ENCODE measurements at regions of chr5 and their contacts with region 1.

Region 1: DNA sequence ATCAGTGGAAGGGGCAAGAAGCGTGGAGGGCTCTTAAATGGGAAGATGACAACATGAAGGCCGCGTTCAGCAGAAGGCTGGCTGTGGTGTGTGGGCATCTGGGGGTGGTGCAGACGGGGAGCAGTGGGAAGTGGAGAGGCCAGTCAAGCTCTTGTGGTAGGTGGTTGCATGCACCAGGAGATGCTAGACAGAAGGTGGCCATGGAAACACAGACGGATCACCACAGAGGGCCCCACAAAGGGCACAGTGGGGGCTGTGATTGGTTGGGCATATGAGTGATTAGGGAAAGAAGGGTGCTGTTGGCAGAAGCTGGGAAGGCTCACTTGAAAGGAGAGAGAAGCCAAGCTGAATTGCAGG is 14.7 kb downstream of the MTMR12 start:
- DNase-seq: no peak
- H3K4me3 ChIP-seq: no peak overlapping the region
- H3K27ac ChIP-seq: no peak overlapping the region
- H3K4me1 ChIP-seq: peaks cover 4% of the 10 kb centered on the region
- H3K27me3 ChIP-seq: no peaks in the 10 kb centered on the region
- CTCF ChIP-seq: no peak
- POLR2A ChIP-seq: no peak

Region 2: DNA sequence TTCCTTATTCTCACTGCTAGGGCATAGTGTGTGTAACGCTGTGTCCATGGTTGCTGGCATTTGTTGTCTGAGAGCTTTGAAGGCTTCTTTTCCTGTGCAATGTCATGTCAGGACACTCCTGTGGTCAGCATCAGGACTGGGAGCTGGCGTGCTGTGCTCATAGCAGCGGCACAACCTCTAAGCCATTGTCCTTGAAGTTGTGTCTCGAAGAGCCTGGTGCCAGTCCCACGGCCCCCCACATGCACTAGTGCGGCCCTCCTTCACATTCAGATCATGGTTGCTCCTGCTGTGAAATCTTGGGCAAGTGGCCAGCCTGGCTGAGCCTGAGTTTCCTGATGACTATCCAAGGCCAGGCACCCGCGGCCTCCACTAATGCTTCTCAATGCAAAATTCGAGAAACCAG is 626.7 kb before region 1 on chr5:
- CTCF ChIA-PET with region 1: no interaction called
- POLR2A ChIA-PET with region 1: no interaction called
- dilution Hi-C with region 1: no loop called
- intact Hi-C with region 1: no loop called
- DNase-seq: no peak
- H3K4me3 ChIP-seq: no peak overlapping the region
- H3K27ac ChIP-seq: no peak overlapping the region
- H3K4me1 ChIP-seq: no peaks in the 10 kb centered on the region
- H3K27me3 ChIP-seq: no peaks in the 10 kb centered on the region
- CTCF ChIP-seq: no peak
- POLR2A ChIP-seq: no peak

Region 3: DNA sequence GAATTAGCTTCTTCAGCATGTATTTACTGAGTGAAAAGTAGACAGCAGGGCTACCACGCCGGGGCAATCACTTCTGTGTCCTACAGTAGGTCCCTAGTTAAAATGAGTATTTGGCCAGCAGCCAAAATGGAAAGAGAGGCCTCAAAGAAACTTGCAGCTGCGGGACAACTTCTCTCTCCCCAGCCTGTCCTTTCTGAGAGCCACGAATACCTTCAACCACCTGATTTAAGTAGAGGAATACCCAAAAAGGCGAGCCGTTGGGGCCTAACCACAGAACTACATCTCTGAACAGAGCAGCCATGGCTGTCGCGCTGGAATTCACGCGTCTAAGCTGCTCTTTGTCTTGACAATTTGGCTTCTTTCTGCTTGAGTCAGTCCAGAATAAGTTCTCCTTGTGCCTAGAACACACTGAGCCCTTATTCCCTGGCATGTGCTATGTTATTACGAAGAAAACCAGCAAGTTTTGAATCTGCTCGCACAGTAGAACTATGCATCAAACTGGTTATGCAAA is 80.1 kb before region 1 on chr5:
- CTCF ChIA-PET with region 1: no interaction called
- POLR2A ChIA-PET with region 1: no interaction called
- dilution Hi-C with region 1: no loop called
- intact Hi-C with region 1: no loop called
- DNase-seq: no peak
- H3K4me3 ChIP-seq: no peak overlapping the region
- H3K27ac ChIP-seq: no peak overlapping the region
- H3K4me1 ChIP-seq: no peaks in the 10 kb centered on the region
- H3K27me3 ChIP-seq: no peaks in the 10 kb centered on the region
- CTCF ChIP-seq: no peak
- POLR2A ChIP-seq: no peak

Region 4: GRCh38 chr5:32283539-32284377 is 14.3 kb before region 1 on chr5:
- CTCF ChIA-PET with region 1: interaction called, 10 read pairs
- POLR2A ChIA-PET with region 1: no interaction called
- dilution Hi-C with region 1: no loop called
- intact Hi-C with region 1: no loop called
- DNase-seq: peak; percentile 55
- H3K4me3 ChIP-seq: no peak overlapping the region
- H3K27ac ChIP-seq: no peak overlapping the region
- H3K4me1 ChIP-seq: peaks cover 13% of the 10 kb centered on the region
- H3K27me3 ChIP-seq: no peaks in the 10 kb centered on the region
- CTCF ChIP-seq: no peak
- POLR2A ChIP-seq: no peak

Region 5: GRCh38 chr5:32859211-32859641 is 561.2 kb after region 1 on chr5:
- CTCF ChIA-PET with region 1: no interaction called
- POLR2A ChIA-PET with region 1: no interaction called
- dilution Hi-C with region 1: no loop called
- intact Hi-C with region 1: no loop called
- DNase-seq: no peak
- H3K4me3 ChIP-seq: no peak overlapping the region
- H3K27ac ChIP-seq: no peak overlapping the region
- H3K4me1 ChIP-seq: no peaks in the 10 kb centered on the region
- H3K27me3 ChIP-seq: no peaks in the 10 kb centered on the region
- CTCF ChIP-seq: no peak
- POLR2A ChIP-seq: no peak

Measured in endothelial cell of umbilical vein (primary cell).